Prostate gland (tissue), 2 donors: ENCODE measurements at regions of chr4 and their contacts with region 1.

Region 1: GRCh38 chr4:170388255-170388654 is 298.5 kb upstream of the AADAT start:
- DNase-seq: no peak
- H3K4me3 ChIP-seq: no peak overlapping the region
- H3K27ac ChIP-seq: no peak overlapping the region
- H3K4me1 ChIP-seq: no peaks in the 10 kb centered on the region
- H3K27me3 ChIP-seq: no peaks in the 10 kb centered on the region
- CTCF ChIP-seq: no peak
- POLR2A ChIP-seq: no peak

Region 2: DNA sequence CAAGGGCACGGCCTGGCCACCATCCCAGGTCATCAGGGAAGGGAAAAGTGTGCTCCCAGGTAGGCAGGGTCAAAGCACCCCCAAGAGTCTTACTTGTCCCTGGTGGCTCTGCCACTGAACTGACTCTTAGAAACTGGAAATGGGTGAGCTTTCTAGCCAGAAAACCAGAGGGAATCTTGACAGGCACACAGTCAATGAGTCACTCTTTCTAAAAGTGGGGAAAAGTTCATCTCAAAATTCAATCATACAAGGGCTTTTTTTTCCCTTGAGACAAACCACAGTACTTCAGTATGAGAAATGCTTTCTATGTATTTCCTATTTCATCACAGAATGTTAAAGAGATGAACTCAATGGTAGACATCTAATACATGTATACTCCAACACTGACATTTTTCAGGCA is 643.0 kb before region 1 on chr4:
- intact Hi-C with region 1: no loop called
- DNase-seq: no peak
- H3K4me3 ChIP-seq: no peak overlapping the region
- H3K27ac ChIP-seq: no peak overlapping the region
- H3K4me1 ChIP-seq: no peaks in the 10 kb centered on the region
- H3K27me3 ChIP-seq: no peaks in the 10 kb centered on the region
- CTCF ChIP-seq: no peak
- POLR2A ChIP-seq: no peak

Region 3: GRCh38 chr4:170352231-170352630 is 36.0 kb before region 1 on chr4:
- intact Hi-C with region 1: no loop called
- DNase-seq: no peak
- H3K4me3 ChIP-seq: no peak overlapping the region
- H3K27ac ChIP-seq: no peak overlapping the region
- H3K4me1 ChIP-seq: no peaks in the 10 kb centered on the region
- H3K27me3 ChIP-seq: no peaks in the 10 kb centered on the region
- CTCF ChIP-seq: no peak
- POLR2A ChIP-seq: no peak

Region 4: DNA sequence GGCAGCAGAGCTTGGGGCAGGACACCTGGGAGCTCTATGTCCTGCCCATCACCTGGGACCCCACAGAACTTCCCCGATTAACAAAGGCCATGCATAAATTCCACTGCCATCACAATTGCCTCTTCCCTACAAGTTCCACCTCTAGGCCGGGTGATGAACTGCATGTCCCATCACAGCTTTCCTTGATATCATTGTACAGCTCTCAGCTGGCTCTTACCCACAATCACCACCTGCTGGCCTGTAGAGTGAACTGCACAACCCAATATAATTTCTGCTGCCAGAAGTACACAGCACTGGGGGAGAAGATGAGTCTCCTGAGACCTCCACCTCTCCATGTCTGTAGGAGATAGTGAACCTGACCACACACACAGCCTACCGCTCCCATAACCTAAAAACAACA is 13.5 kb before region 1 on chr4:
- intact Hi-C with region 1: loop called (anchors 1 kb)
- DNase-seq: no peak
- H3K4me3 ChIP-seq: no peak overlapping the region
- H3K27ac ChIP-seq: no peak overlapping the region
- H3K4me1 ChIP-seq: no peaks in the 10 kb centered on the region
- H3K27me3 ChIP-seq: no peaks in the 10 kb centered on the region
- CTCF ChIP-seq: peak in 2 of 4 experiments; percentile 12 to 19
- POLR2A ChIP-seq: no peak

Region 5: DNA sequence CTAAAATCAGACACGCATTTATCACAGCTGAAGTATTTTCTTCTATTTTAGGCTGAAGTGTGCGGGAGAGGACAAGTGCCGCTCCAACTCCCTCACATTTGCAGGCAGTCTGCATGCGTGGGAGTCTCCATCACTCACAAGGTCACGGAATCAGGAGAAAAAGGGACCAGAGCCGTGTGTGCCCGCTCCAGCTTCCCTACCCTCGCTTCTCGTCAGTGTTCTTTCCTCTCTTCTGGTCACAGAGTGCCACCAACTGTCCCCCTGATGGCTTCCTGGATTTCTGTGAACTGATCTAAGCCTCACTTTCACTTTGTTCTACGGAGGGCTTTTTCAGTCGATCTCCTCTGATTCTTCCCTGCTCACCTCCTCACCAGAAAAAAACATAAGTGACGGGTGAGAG is 108.9 kb after region 1 on chr4:
- intact Hi-C with region 1: no loop called
- DNase-seq: no peak
- H3K4me3 ChIP-seq: no peak overlapping the region
- H3K27ac ChIP-seq: no peak overlapping the region
- H3K4me1 ChIP-seq: no peaks in the 10 kb centered on the region
- H3K27me3 ChIP-seq: no peaks in the 10 kb centered on the region
- CTCF ChIP-seq: no peak
- POLR2A ChIP-seq: no peak